AG04449 (cell line): ENCODE measurements at regions of chr1 and their contacts with region 1.

Region 1: DNA sequence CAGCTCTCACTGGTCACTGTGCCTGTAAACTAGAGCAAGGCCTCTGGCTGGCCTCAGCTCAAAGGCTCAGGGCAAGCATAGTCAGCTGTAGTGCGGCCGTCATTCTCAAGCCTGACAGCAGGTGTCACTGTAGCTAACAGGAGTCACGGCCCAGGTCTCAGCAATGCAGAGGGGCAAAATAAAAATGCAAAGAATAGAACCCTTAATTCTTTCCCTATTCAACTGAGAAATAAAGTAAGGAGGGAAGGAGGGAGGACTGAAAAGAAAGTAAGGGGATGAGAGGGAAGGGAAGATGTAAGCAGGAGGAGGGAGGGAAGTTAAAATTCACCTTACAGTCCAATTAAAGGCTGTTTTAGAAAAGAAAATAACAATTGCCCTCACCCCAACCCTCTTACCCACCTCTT is 106.1 kb downstream of the KIAA0319L start:
- DNase-seq: no peak
- H3K4me3 ChIP-seq: no peak overlapping the region
- CTCF ChIP-seq: peak; percentile 88

Region 2: GRCh38 chr1:35129080-35129479 is 322.0 kb before region 1 on chr1:
- CTCF ChIA-PET with region 1: no interaction called
- POLR2A ChIA-PET with region 1: no interaction called
- DNase-seq: no peak
- H3K4me3 ChIP-seq: no peak overlapping the region
- CTCF ChIP-seq: no peak

Region 3: GRCh38 chr1:35319988-35320713 is 131.0 kb before region 1 on chr1:
- CTCF ChIA-PET with region 1: no interaction called
- POLR2A ChIA-PET with region 1: no interaction called
- DNase-seq: no peak
- H3K4me3 ChIP-seq: no peak overlapping the region
- CTCF ChIP-seq: no peak

Region 4: GRCh38 chr1:35532497-35533223 is 81.5 kb after region 1 on chr1:
- CTCF ChIA-PET with region 1: interaction called, 20 read pairs
- POLR2A ChIA-PET with region 1: no interaction called
- DNase-seq: no peak
- H3K4me3 ChIP-seq: no peak overlapping the region
- CTCF ChIP-seq: no peak

Region 5: DNA sequence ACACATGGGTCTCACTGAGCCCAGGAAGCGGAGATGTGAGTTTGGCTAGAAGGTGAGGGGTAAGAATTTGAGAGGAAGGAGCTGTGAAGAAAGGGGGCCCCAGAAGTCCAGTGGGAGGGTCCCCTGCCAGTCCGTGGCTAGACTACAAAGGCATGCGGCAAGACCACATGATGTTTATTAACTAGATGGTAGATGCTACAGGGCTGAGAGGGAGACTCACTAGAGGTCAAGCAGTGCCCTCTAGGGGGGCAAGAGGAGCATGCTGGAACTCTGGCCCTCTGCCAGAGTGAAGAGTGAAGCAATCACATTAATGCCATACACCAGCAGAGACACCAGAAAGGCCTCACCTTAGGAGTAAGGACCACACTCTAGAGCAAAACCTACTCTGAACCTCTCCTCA is 93.9 kb after region 1 on chr1:
- CTCF ChIA-PET with region 1: interaction called, 222 read pairs
- POLR2A ChIA-PET with region 1: no interaction called
- DNase-seq: no peak
- H3K4me3 ChIP-seq: no peak overlapping the region
- CTCF ChIP-seq: peak; percentile 16

Region 6: GRCh38 chr1:35577071-35577998 is 126.2 kb after region 1 on chr1:
- CTCF ChIA-PET with region 1: interaction called, 14 read pairs
- POLR2A ChIA-PET with region 1: no interaction called
- DNase-seq: no peak
- H3K4me3 ChIP-seq: no peak overlapping the region
- CTCF ChIP-seq: no peak

Region 7: DNA sequence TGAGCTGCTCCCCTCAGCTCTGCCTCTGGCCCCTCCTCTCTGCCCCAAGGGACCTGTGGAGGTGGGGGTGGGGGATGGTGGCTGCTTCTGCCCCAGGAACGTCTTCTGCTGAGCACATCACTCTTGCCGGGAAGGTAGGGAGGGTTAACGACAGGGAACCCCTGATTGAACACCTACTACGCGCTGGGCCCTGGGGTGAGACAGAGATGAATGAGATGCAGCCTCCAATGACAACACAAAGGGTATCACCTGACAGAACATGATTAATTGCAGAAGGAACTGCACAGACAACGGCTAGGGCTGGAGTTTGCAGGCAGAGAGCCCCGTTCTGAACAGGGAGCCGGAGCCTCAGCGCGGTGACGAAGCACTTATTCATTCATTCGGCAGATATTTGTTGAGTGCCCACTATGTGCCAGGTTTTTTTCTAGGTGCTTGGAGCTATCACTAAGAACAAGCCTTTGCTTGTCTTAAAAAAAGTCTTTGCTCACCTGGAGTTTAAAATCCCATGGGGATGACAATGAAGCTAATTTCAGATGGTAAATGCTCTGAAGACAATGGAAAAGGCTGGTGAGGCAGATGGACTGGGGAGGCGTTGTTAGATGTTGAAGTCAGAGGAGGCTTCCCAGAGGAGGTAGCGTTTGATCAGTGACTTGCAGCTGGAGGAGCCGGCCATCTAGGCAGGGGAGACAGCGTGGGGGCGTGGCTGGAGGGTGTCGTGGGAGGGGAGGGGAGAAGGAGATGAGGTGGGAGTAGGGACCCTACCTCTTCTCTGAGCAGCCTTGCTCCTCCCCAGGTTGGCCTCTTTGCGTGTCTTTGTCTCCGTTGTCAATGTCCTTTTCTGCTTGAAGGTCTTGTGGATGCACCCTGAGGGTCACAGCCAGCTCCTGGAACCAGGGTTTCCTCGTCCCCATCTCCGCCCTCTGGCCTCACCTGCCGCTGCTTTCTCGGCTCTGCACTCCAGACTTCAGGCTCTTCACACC is 1134.7 kb after region 1 on chr1:
- CTCF ChIA-PET with region 1: no interaction called
- POLR2A ChIA-PET with region 1: no interaction called
- DNase-seq: no peak
- H3K4me3 ChIP-seq: no peak overlapping the region
- CTCF ChIP-seq: no peak